Endothelial cell of umbilical vein (primary cell): ENCODE measurements at regions of chr15 and their contacts with region 1.

Region 1: DNA sequence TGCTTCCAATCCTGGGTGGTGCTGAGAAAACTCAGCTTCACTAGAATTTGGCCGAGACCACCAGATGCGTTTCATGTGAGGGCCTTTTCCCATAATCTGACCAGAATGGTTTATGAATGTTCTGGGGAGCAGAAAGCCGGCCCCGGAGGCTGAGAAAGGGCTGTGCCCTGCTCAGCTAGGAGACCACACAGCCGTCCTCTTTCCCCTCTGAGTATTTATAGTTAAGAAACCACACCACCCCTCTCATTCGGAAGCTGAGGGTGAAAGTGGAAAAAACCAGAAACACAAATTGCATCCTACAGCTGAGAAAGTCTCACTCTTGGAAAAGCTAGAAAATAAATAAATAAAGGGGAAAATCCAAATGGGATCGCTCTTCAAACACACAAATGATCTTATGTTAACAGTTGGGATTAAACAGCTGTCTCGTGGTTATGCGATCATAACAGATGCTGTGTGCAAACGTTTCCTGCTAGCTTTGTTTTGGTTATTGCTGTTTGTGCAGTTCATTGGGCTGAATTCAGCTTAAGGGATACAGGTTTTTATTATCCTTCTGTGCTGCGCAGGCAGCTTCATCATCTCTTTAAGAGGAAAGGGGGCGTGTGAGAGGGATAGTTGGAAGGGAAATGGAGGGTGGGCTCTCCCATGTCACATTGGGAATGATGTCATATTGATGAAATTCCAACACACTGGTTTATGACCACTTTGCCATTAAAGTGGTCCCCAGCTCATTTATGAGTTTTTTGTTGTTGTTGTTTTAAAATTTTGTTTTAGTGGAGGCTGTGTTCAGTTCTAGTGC is 1026.2 kb upstream of the NR2F2 start:
- DNase-seq: peak; percentile 98
- H3K4me3 ChIP-seq: no peak overlapping the region
- H3K27ac ChIP-seq: peak overlapping the region; percentile 97
- H3K4me1 ChIP-seq: peaks cover 52% of the 10 kb centered on the region
- H3K27me3 ChIP-seq: no peaks in the 10 kb centered on the region
- CTCF ChIP-seq: no peak
- POLR2A ChIP-seq: no peak

Region 2: DNA sequence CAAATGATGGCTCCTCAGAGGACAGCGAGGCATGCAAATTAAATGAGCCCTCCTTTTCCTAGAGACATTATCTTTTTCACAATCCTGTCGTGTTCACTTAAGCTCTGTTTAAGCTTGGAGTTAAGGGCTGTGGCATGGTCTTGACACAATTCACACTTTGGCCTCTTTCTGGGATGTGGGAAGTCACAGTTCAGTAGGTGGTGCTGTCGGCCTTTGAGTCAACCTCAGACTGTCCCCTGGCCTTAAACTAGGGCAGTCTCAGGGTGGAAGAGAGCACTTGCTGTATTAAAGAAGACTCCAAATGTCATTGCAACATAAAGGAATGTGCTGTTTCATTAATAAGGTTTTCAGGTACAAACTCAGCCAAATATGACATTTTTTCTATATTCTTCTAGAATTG is 722.0 kb before region 1 on chr15:
- CTCF ChIA-PET with region 1: no interaction called
- POLR2A ChIA-PET with region 1: no interaction called
- dilution Hi-C with region 1: no loop called
- intact Hi-C with region 1: loop called (anchors 5 kb)
- DNase-seq: peak; percentile 85
- H3K4me3 ChIP-seq: no peak overlapping the region
- H3K27ac ChIP-seq: no peak overlapping the region
- H3K4me1 ChIP-seq: peaks cover 25% of the 10 kb centered on the region
- H3K27me3 ChIP-seq: no peaks in the 10 kb centered on the region
- CTCF ChIP-seq: peak; percentile 75 to 80
- POLR2A ChIP-seq: no peak

Region 3: GRCh38 chr15:95175914-95176658 is 128.3 kb before region 1 on chr15:
- CTCF ChIA-PET with region 1: interaction called, 5 read pairs
- POLR2A ChIA-PET with region 1: no interaction called
- dilution Hi-C with region 1: no loop called
- intact Hi-C with region 1: loop called (anchors 1 kb)
- DNase-seq: peak; percentile 94
- H3K4me3 ChIP-seq: no peak overlapping the region
- H3K27ac ChIP-seq: peak overlapping the region; percentile 95
- H3K4me1 ChIP-seq: peaks cover 30% of the 10 kb centered on the region
- H3K27me3 ChIP-seq: no peaks in the 10 kb centered on the region
- CTCF ChIP-seq: no peak
- POLR2A ChIP-seq: no peak

Region 4: GRCh38 chr15:95326431-95327182 is 22.3 kb after region 1 on chr15:
- CTCF ChIA-PET with region 1: interaction called, 9 read pairs
- POLR2A ChIA-PET with region 1: interaction called, 8 read pairs
- dilution Hi-C with region 1: no loop called
- intact Hi-C with region 1: loop called (anchors 1 kb)
- DNase-seq: peak; percentile 75
- H3K4me3 ChIP-seq: peak overlapping the region; percentile 64 to 81 (median 65)
- H3K27ac ChIP-seq: peak overlapping the region; percentile 98
- H3K4me1 ChIP-seq: peaks cover 63% of the 10 kb centered on the region
- H3K27me3 ChIP-seq: no peaks in the 10 kb centered on the region
- CTCF ChIP-seq: peak in 1 of 2 donors; percentile 0
- POLR2A ChIP-seq: no peak

Region 5: DNA sequence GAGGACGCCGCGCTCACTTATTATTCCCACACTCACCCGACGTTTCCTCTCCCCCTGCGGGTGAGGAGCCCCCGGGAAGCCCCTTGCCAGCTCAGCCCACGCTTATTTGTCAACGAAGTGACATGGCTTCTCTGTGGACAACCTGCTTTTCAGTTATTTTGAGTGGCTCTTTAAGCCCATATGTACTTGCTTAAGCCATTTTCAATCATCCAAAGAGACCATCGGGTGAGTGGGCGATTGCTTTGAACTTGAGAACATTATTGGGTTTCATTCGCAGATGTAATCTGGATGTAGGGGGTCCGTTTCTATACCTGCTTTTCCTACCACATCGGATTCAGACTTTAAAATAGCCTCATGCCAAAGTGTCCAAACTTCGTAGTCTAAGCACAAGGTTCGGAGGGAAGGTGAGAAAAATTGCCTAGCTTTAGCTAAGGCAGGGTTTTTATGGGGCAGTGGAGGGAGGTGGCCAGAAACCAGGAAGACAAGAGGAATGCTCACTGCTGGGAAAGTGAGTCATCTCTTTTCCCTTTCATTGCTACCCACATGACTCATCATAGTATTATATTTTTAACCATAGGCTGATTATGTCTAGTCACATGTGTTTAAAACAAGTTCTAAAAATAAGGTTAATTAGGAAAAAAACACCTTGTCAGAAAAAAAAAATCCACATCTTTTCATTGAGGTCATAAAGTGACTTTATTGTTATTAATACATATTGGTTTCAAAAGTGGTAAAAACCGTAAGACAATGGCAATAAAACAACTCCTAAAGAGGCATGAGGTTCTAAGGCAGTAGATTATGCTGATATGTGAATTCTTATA is 253.1 kb after region 1 on chr15:
- CTCF ChIA-PET with region 1: interaction called, 3 read pairs
- POLR2A ChIA-PET with region 1: no interaction called
- dilution Hi-C with region 1: no loop called
- intact Hi-C with region 1: loop called (anchors 1 kb)
- DNase-seq: peak; percentile 96
- H3K4me3 ChIP-seq: peak overlapping the region in 1 of 3 experiments; percentile 10
- H3K27ac ChIP-seq: peak overlapping the region; percentile 100
- H3K4me1 ChIP-seq: peaks cover 39% of the 10 kb centered on the region
- H3K27me3 ChIP-seq: no peaks in the 10 kb centered on the region
- CTCF ChIP-seq: no peak
- POLR2A ChIP-seq: no peak

Region 6: DNA sequence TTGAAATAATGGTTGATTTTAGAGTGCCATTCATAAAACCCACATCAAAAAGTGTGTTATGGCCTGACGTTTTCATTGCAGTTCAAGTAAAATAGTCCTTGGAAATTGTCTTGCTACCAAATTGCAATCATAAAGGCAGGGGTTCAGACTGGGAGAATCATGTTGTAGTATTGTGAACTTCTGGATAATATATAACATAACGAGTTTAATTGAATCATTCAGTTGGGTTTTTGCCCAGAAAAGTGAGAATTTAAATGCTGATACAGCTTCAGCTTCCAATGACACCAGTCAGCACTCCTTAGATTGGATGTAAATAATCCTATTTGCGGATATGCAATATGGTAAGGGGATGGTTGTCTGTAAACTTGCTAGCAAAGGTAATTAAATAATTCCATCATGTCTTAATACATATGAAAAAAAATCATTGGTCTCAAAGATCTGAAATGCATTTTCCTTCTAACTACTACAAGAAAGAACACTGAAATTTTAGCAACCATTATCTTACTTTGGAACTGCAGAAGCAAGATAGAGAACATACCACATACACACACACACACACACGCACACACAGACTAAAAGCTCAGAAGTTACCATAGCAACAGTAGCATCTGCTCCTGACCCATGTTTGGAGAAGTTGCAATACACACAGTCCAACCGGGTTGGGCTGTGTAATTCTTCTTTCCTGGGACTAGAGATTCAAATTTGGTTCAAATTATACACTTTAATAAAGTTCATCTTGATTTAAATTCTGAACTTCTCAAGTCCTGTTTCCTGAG is 339.9 kb after region 1 on chr15:
- CTCF ChIA-PET with region 1: no interaction called
- POLR2A ChIA-PET with region 1: no interaction called
- dilution Hi-C with region 1: no loop called
- intact Hi-C with region 1: no loop called
- DNase-seq: no peak
- H3K4me3 ChIP-seq: no peak overlapping the region
- H3K27ac ChIP-seq: no peak overlapping the region
- H3K4me1 ChIP-seq: no peaks in the 10 kb centered on the region
- H3K27me3 ChIP-seq: no peaks in the 10 kb centered on the region
- CTCF ChIP-seq: no peak
- POLR2A ChIP-seq: no peak

Region 7: DNA sequence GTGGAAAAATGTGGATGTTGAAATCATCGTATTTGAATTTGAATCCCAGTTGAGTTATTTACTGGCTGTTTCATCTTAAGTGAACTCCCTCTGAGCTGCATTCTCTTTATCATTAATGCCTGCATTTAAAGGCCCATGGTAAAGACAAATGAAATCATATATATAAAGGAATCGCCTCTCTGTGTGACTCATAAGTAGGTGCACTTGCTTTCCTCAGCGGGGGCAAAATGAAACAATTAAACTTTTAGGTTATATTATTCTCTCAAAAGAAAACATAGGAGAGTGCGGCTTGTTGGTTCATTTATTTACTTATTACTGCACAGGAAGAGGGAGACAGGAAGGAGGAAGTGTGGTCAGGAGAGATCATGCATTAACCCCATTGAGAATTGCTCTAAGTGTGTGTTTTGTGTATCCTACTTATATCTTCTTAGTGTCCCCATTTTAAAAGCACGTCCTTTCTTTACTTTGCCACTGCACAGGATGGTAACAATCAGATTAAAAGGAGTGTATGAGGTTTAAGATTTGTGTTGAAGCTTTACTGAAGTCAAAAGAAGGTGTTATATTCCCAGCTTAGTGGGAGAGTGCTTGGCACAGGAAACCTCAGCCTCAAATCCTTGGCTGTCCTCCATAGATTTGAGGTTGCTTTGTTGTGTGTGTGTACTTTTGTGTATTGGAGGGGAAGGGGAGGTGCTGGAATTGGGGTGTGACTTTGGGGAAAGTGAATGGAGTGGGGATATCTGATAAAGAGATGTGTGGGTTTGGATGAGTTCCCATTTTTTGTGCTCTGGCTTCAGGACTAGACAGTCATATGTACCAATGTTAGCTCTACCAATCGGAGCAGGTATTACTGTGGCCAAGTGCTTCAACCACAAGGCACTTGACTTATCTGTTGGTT is 430.3 kb after region 1 on chr15:
- CTCF ChIA-PET with region 1: no interaction called
- POLR2A ChIA-PET with region 1: no interaction called
- dilution Hi-C with region 1: no loop called
- intact Hi-C with region 1: loop called (anchors 1 kb)
- DNase-seq: peak; percentile 96
- H3K4me3 ChIP-seq: no peak overlapping the region
- H3K27ac ChIP-seq: peak overlapping the region; percentile 70
- H3K4me1 ChIP-seq: peaks cover 28% of the 10 kb centered on the region
- H3K27me3 ChIP-seq: no peaks in the 10 kb centered on the region
- CTCF ChIP-seq: no peak
- POLR2A ChIP-seq: peak; percentile 50

Region 8: GRCh38 chr15:96345560-96346399 is 1041.4 kb after region 1 on chr15:
- CTCF ChIA-PET with region 1: interaction called, 3 read pairs
- POLR2A ChIA-PET with region 1: interaction called, 4 read pairs
- dilution Hi-C with region 1: loop called (anchors 25 kb)
- intact Hi-C with region 1: loop called (anchors 2 kb)
- DNase-seq: peak; percentile 86
- H3K4me3 ChIP-seq: peak overlapping the region; percentile 16 to 99 (median 74)
- H3K27ac ChIP-seq: peak overlapping the region; percentile 87
- H3K4me1 ChIP-seq: peaks cover 83% of the 10 kb centered on the region
- H3K27me3 ChIP-seq: no peaks in the 10 kb centered on the region
- CTCF ChIP-seq: peak; percentile 22 to 33
- POLR2A ChIP-seq: no peak